Activated CD4-positive, alpha-beta memory T cell treated with anti-CD3 and anti-CD28 coated beads, Interleukin-2, amount 10 ng/mL, durations not matched to agents 7 days and 5 days (primary cell): ENCODE measurements at regions of chrX and their contacts with region 1.

Region 1: GRCh38 chrX:65595460-65595876 is 60.9 kb upstream of the LAS1L start:
- DNase-seq: peak; percentile 93
- H3K4me3 Mint-ChIP-seq: peak overlapping the region; percentile 62
- H3K27ac Mint-ChIP-seq: peak overlapping the region; percentile 94
- H3K4me1 Mint-ChIP-seq: peaks cover 56% of the 10 kb centered on the region
- H3K27me3 Mint-ChIP-seq: no peaks in the 10 kb centered on the region

Region 2: GRCh38 chrX:65508851-65509250 is 86.6 kb before region 1 on chrX:
- CTCF ChIA-PET with region 1: no interaction called
- POLR2A ChIA-PET with region 1: no interaction called
- DNase-seq: no peak
- H3K4me3 Mint-ChIP-seq: no peak overlapping the region
- H3K27ac Mint-ChIP-seq: no peak overlapping the region
- H3K4me1 Mint-ChIP-seq: no peaks in the 10 kb centered on the region
- H3K27me3 Mint-ChIP-seq: no peaks in the 10 kb centered on the region

Region 3: DNA sequence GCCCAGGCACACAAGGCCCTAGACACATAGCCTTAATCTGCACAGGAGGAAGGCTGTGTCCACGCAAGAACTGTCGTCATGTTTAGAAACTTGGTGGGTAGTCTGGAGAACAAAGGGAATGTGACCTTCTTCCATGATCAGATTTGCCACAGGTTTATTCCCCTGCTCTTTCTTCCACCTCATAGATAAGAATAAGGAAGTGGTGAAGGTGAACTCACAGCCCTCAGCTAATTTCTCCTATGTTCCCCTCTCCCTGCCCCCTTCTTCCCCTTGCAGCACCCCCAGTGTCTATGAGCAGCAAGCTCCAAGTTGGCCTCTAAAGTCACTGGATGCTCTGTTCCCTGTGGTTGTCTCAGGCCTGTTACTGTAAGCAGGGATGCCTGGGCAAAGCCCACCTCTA is 21.1 kb before region 1 on chrX:
- CTCF ChIA-PET with region 1: no interaction called
- POLR2A ChIA-PET with region 1: no interaction called
- DNase-seq: no peak
- H3K4me3 Mint-ChIP-seq: no peak overlapping the region
- H3K27ac Mint-ChIP-seq: no peak overlapping the region
- H3K4me1 Mint-ChIP-seq: no peaks in the 10 kb centered on the region
- H3K27me3 Mint-ChIP-seq: no peaks in the 10 kb centered on the region

Region 4: GRCh38 chrX:65667503-65668376 is 72.3 kb after region 1 on chrX and contains the start of gene MSN:
- CTCF ChIA-PET with region 1: interaction called, 6 read pairs
- POLR2A ChIA-PET with region 1: interaction called, 50 read pairs
- DNase-seq: peak; percentile 82
- H3K4me3 Mint-ChIP-seq: peak within 1 kb of the TSS; percentile 91
- H3K27ac Mint-ChIP-seq: peak within 1 kb of the TSS; percentile 89
- H3K4me1 Mint-ChIP-seq: peaks cover 38% of the 10 kb centered on the region
- H3K27me3 Mint-ChIP-seq: no peaks in the 10 kb centered on the region
- total RNA-seq, gene MSN: 632 to 637 TPM

Region 5: GRCh38 chrX:65674204-65674893 is 78.9 kb after region 1 on chrX:
- CTCF ChIA-PET with region 1: interaction called, 9 read pairs
- POLR2A ChIA-PET with region 1: interaction called, 50 read pairs
- DNase-seq: peak; percentile 34
- H3K4me3 Mint-ChIP-seq: peak overlapping the region; percentile 91
- H3K27ac Mint-ChIP-seq: peak overlapping the region; percentile 83
- H3K4me1 Mint-ChIP-seq: peaks cover 73% of the 10 kb centered on the region
- H3K27me3 Mint-ChIP-seq: no peaks in the 10 kb centered on the region

Region 6: DNA sequence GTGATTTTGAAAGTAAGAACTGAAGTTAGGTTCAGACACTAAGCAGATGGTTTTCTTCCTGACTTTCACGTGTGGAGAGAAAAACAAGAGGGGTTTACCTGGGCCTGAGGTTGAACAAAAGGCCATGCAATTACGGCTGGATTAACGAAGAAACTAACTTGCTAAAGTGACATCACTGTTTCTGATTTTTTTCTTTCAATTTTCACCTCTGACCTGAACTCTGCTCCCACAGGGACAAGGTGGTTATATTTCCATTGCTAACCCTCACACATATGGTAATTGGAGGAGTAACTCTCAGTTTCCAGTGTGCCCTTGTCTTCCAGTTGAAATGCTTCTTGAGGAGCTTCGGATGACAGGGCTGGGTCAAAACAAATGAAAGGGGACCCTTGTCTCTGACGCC is 110.0 kb after region 1 on chrX:
- CTCF ChIA-PET with region 1: interaction called, 10 read pairs
- POLR2A ChIA-PET with region 1: interaction called, 3 read pairs
- DNase-seq: no peak
- H3K4me3 Mint-ChIP-seq: peak overlapping the region; percentile 43
- H3K27ac Mint-ChIP-seq: peak overlapping the region; percentile 75
- H3K4me1 Mint-ChIP-seq: peaks cover 79% of the 10 kb centered on the region
- H3K27me3 Mint-ChIP-seq: no peaks in the 10 kb centered on the region

Region 7: GRCh38 chrX:65994519-65995506 is 399.3 kb after region 1 on chrX:
- CTCF ChIA-PET with region 1: no interaction called
- POLR2A ChIA-PET with region 1: no interaction called
- DNase-seq: no peak
- H3K4me3 Mint-ChIP-seq: no peak overlapping the region
- H3K27ac Mint-ChIP-seq: no peak overlapping the region
- H3K4me1 Mint-ChIP-seq: peaks cover 14% of the 10 kb centered on the region
- H3K27me3 Mint-ChIP-seq: no peaks in the 10 kb centered on the region